Common myeloid progenitor, CD34-positive (primary cell): ENCODE measurements at regions of chr5 and their contacts with region 1.

Region 1: GRCh38 chr5:134161513-134162395 is 15.0 kb downstream of the SKP1 start:
- DNase-seq: no peak
- H3K4me3 ChIP-seq: peak overlapping the region in 1 of 7 experiments; percentile 25
- H3K27ac ChIP-seq: no peak overlapping the region
- H3K4me1 ChIP-seq: no peaks in the 10 kb centered on the region
- H3K27me3 ChIP-seq: no peaks in the 10 kb centered on the region

Region 2: DNA sequence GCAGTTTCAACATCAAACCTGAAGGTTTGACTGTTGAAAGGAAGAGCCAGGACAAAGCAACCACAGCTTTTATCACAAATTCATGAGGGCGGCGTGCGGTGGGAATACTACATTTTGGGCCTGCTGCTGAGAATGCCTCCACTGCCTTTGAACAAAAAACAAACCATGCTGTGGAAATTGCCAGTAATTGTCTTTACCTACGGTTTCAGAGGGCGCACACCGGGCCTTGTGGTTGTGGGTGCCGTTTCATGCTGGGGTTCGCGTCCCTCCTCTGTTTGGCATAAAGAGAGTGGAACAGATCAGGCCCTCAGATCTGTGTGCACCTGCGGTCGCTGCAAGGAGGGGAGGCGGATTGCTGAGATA is 74.8 kb before region 1 on chr5:
- CTCF ChIA-PET with region 1: no interaction called
- POLR2A ChIA-PET with region 1: no interaction called
- DNase-seq: no peak
- H3K4me3 ChIP-seq: no peak overlapping the region
- H3K27ac ChIP-seq: no peak overlapping the region
- H3K4me1 ChIP-seq: no peaks in the 10 kb centered on the region
- H3K27me3 ChIP-seq: peaks cover 0 to 1% (median 0%) of the 10 kb centered on the region in 5 experiments

Region 3: DNA sequence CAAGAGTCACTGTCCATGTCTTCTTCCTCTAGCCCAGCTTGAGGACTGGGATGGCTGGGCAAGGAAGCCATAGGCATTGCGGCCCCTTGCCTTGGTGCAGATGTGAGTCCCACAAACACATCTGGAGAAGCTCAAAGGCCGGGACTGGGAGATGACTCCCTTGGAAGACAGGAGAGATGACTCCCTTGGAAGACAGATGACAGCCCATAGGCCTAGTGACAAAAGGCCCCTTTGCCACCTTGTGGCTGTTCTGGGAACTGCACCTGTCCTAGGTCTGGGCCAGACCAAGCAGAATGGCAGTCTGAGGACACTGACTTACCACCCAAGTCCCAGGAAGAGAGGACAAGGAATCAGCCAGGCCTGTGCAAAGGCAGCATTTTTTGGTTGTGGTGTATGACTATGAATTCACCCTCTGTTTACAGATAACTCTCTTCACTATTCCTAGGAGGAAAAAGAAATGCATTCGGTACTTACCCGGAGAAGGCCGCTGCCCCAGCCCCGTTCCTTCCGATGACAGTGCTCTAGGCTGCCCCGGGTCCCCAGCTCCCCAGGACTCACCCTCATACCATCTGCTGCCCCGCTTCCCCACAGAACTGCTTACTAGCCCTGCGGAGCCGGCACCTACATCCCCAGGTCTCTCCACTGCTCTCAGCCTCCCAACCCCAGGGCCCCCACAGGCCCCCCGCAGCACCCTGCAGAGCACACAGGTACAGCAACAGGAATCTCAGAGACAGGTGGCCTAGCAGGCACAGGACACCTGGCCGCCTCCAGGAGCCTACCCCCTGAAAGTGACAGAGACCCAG is 15.8 kb before region 1 on chr5:
- CTCF ChIA-PET with region 1: interaction called, 14 read pairs
- POLR2A ChIA-PET with region 1: interaction called, 6 read pairs
- DNase-seq: peak; percentile 60 to 85 (median 79)
- H3K4me3 ChIP-seq: no peak overlapping the region
- H3K27ac ChIP-seq: no peak overlapping the region
- H3K4me1 ChIP-seq: peaks cover 0 to 3% (median 2%) of the 10 kb centered on the region in 4 experiments
- H3K27me3 ChIP-seq: no peaks in the 10 kb centered on the region